ENCODE measurements at regions of chr9 and their contacts with region 1.

Region 1: GRCh38 chr9:91422758-91423711 is 597 bp downstream of the NFIL3 start:
- DNase-seq: peak; percentile 51
- H3K4me3 Mint-ChIP-seq: peak overlapping the region; percentile 98
- H3K27ac Mint-ChIP-seq: peak overlapping the region; percentile 96
- H3K4me1 Mint-ChIP-seq: peaks cover 63% of the 10 kb centered on the region
- H3K27me3 Mint-ChIP-seq: peaks cover 1% of the 10 kb centered on the region

Region 2: DNA sequence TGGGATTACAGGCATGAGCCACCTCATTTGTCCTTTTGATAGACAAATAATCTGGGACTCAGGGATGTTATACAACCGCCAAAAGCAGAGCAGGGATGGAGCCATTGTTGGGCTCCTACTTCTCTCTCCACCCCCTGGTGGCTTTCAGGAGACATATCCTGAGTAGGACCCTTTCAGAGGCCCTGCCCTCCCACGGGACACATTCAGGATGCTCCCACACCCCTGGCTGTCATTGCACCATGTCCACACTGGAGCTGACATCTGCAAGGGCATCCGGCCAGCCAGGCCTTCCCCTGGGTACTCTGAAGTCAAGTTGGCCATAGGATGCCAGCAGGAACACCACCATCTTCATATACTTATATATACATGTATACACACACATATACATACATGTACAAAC is 439.6 kb before region 1 on chr9:
- intact Hi-C with region 1: loop called (anchors 5 kb)
- DNase-seq: no peak
- H3K4me3 Mint-ChIP-seq: no peak overlapping the region
- H3K27ac Mint-ChIP-seq: no peak overlapping the region
- H3K4me1 Mint-ChIP-seq: no peaks in the 10 kb centered on the region
- H3K27me3 Mint-ChIP-seq: peaks cover 7% of the 10 kb centered on the region

Region 3: GRCh38 chr9:91089405-91090129 is 333.5 kb before region 1 on chr9:
- intact Hi-C with region 1: loop called (anchors 5 kb)
- DNase-seq: no peak
- H3K4me3 Mint-ChIP-seq: no peak overlapping the region
- H3K27ac Mint-ChIP-seq: peak overlapping the region; percentile 71
- H3K4me1 Mint-ChIP-seq: peaks cover 54% of the 10 kb centered on the region
- H3K27me3 Mint-ChIP-seq: no peaks in the 10 kb centered on the region

Region 4: DNA sequence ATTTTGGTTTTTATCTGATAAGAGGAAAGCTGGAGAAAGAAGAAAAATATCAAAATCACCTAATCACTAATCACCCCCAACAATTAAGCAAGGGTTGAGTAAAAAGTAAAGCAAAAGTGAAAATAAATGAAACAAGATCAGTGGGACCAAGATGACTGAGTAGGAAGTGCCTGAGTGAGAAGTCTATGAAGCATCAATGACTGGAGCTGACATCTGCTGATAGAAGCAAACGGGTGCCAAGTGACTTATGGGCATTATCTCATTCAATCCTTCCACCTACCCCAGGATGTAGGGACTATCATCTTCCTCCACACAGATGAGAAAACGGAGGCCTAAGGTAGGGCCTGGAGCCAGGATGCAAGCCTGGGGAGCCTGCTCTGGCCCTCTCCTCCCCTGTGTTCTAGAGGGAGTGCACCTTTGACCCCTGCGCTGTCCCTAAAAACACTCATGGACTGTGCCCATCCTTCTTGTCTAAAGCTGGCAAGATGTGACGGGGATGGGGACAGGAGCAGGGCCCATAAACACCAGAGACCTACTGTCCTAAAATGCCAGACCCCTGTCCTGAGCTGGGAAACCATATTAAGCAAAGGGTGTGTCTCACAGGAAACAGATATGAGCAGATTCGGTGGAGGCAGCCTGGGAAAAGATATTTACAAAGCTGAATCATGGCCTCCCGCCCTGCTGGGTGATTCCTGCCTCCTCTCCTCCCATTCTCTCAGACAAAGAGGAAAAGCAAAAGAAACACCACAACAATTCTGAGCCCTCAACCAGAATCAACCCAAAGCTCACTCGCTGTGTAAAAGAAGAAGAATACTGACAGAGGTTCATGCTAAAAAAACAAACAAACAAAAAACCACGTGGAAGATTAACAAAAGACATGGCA is 177.4 kb before region 1 on chr9:
- intact Hi-C with region 1: loop called (anchors 2 kb)
- DNase-seq: peak; percentile 6
- H3K4me3 Mint-ChIP-seq: no peak overlapping the region
- H3K27ac Mint-ChIP-seq: peak overlapping the region; percentile 79
- H3K4me1 Mint-ChIP-seq: peaks cover 56% of the 10 kb centered on the region
- H3K27me3 Mint-ChIP-seq: no peaks in the 10 kb centered on the region

Region 5: DNA sequence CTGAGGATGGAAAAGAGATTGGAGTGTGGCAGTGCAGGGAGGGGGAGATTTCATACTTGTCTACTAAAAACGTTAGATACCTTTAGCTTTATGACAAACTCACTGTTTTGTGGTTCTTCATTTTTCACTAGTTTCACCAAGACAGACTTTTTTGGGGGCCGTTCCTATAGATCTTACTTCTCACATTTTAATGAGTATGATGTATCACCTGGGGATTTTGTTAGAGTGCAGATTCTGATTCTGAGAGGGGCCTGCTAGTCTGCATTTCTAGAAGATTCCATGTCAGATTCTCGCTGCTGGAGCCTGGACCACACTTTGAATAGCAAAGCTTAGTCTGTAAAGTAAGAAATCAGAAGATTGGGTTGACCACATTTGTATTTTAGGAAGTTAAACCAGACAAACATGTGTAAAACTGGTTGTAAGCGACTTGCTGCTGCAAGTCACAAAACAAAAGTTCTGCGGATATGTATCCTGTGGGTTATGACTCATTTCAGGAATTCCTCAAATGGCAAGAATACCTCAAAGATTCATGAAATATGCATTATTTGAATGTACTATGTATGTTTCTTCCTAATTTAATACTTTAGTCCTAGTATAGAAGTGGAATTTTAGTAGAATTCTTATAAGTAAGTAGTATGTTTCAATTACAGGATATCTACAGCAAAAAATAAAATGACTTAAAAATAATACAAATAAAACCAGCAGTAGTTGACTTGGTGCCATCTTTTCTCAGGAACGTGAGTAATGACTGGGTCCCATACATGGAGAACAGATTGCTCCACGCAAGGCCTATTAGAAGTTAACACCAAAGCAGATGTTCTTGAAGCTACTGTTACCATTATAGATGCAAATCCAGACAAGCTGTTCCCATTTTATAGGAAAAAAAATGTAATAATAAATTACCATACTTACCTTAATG is 27.2 kb before region 1 on chr9:
- intact Hi-C with region 1: loop called (anchors 1 kb)
- DNase-seq: peak; percentile 33
- H3K4me3 Mint-ChIP-seq: peak overlapping the region; percentile 73
- H3K27ac Mint-ChIP-seq: peak overlapping the region; percentile 84
- H3K4me1 Mint-ChIP-seq: peaks cover 21% of the 10 kb centered on the region
- H3K27me3 Mint-ChIP-seq: peaks cover 11% of the 10 kb centered on the region